ENCODE measurements at regions of chr3 and their contacts with region 1.

Region 1: GRCh38 chr3:79247725-79248043 is 520.1 kb downstream of the ROBO1 start:
- DNase-seq: no peak
- H3K4me3 ChIP-seq: no peak overlapping the region
- CTCF ChIP-seq: no peak
- POLR2A ChIP-seq: no peak

Region 2: GRCh38 chr3:79632842-79633241 is 385.2 kb after region 1 on chr3:
- intact Hi-C with region 1: no loop called
- DNase-seq: no peak
- H3K4me3 ChIP-seq: no peak overlapping the region
- CTCF ChIP-seq: no peak
- POLR2A ChIP-seq: no peak

Region 3: DNA sequence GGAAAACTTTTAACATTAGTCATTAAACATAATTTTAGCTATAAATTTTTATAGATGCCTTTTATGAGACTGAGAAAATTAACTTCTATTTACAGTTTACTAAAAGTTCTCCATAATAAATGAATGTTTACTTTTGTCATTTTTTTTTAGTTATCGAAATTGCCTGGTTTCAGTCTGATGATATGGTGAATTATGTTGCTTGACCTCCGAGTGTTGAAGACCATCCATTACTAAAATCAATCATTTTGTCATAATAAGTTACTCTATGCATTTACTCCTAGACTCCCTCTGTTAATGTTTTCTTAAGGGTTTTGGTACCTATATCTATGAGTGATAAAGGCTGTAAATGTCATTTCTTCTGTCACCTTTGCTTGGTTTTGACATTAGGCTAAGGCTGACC is 1036.1 kb after region 1 on chr3:
- intact Hi-C with region 1: loop called (anchors 5 kb)
- DNase-seq: no peak
- H3K4me3 ChIP-seq: no peak overlapping the region
- CTCF ChIP-seq: no peak
- POLR2A ChIP-seq: no peak

Region 4: GRCh38 chr3:81086348-81086747 is 1838.7 kb after region 1 on chr3:
- intact Hi-C with region 1: no loop called
- DNase-seq: no peak
- H3K4me3 ChIP-seq: no peak overlapping the region
- CTCF ChIP-seq: no peak
- POLR2A ChIP-seq: no peak

Measured in lower leg skin (tissue), 4 donors.